ENCODE measurements at regions of chr6 and their contacts with region 1.

Region 1: DNA sequence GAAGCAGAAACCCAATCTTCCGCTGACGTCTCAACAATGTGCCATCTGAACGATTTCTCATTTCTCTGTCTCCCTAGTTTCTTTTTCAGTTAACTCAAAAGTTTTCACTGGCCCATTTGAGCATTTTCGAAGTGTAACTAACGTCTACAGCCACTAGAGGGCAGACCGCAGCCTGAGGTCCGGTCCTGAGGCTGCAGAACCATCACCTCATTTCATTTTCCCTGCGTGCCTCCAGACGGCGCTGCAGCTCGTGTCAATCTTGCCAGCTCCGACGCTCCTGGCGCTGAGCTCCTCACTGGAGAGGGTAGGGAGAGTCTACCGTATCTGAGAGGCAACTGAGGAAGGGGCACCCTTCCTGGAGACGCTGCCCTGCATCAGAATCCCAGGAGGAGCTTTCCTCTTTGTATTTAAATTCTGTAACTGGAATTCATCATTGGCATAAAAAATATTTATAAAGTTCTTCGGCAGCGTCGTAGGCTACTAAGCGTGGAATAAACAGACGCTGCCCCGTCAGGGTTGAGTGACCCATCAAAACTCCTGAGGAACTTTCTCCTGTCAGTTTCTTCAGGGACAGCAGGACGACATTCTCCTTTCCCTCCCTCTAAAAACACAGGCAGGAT is 28.5 kb upstream of the DTNBP1 start:
- DNase-seq: peak; percentile 85 to 92
- H3K4me3 ChIP-seq: peak overlapping the region; percentile 43 to 46
- H3K27ac ChIP-seq: peak overlapping the region; percentile 48 to 57
- H3K4me1 ChIP-seq: peaks cover 0 to 14% (median 9%) of the 10 kb centered on the region in 4 donors
- H3K27me3 ChIP-seq: no peaks in the 10 kb centered on the region
- CTCF ChIP-seq: peak; percentile 98 to 100

Region 2: DNA sequence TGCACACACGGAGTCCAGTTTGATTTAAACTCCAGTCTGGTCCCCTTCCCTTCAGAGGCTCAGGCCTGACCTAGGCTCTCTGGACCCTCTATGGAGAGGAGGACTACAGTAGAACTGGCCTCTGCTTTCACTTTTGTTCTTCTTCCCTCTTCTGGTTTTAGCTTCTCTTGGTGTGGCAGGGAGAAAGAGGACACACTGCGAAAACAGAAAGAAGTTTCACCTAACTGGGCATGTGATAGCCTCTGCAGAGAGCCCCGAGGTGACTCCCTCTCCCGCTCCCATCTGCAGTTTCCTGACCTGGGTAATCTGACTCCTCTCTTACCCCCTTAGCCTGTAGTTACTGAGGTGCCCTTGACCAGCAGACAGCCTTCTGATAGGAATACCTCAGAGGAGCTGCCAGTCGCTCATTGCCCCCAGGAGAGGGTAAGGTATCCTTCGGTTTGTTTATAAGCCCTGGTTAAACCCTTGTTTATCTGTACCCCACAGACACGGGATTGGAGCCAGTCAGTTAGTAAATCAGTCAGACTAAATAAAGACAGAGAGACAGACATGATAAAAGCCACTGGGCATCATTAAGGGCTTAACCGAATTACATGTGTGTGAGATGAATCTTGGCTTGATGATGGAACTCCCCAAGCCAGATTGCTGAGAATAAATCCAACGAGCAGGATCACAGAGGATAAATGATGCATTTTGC is 16.5 kb before region 1 on chr6:
- intact Hi-C with region 1: no loop called
- DNase-seq: no peak
- H3K4me3 ChIP-seq: no peak overlapping the region
- H3K27ac ChIP-seq: no peak overlapping the region
- H3K4me1 ChIP-seq: no peaks in the 10 kb centered on the region
- H3K27me3 ChIP-seq: peaks cover 0 to 7% of the 10 kb centered on the region in 2 donors
- CTCF ChIP-seq: no peak

Region 3: GRCh38 chr6:16128759-16129622 is 437.6 kb after region 1 on chr6 and contains the start of gene MYLIP:
- intact Hi-C with region 1: loop called (anchors 2 kb)
- DNase-seq: peak; percentile 96 to 99
- H3K4me3 ChIP-seq: peak within 1 kb of the TSS; percentile 84 to 90
- H3K27ac ChIP-seq: peak within 1 kb of the TSS; percentile 95 to 98
- H3K4me1 ChIP-seq: peaks cover 0 to 46% (median 24%) of the 10 kb centered on the region in 4 donors
- H3K27me3 ChIP-seq: no peaks in the 10 kb centered on the region
- CTCF ChIP-seq: peak; percentile 63 to 74

Region 4: GRCh38 chr6:16206595-16207037 is 515.3 kb after region 1 on chr6:
- intact Hi-C with region 1: loop called (anchors 2 kb)
- DNase-seq: peak in 1 of 2 donors; percentile 72
- H3K4me3 ChIP-seq: no peak overlapping the region
- H3K27ac ChIP-seq: peak overlapping the region; percentile 5 to 69
- H3K4me1 ChIP-seq: peaks cover 0 to 30% (median 12%) of the 10 kb centered on the region in 4 donors
- H3K27me3 ChIP-seq: no peaks in the 10 kb centered on the region
- CTCF ChIP-seq: peak; percentile 94 to 97

Region 5: GRCh38 chr6:16277101-16277981 is 586.0 kb after region 1 on chr6:
- intact Hi-C with region 1: loop called (anchors 10 kb)
- DNase-seq: peak; percentile 85 to 94
- H3K4me3 ChIP-seq: peak overlapping the region; percentile 10 to 11
- H3K27ac ChIP-seq: peak overlapping the region; percentile 39 to 60
- H3K4me1 ChIP-seq: peaks cover 0 to 29% (median 20%) of the 10 kb centered on the region in 4 donors
- H3K27me3 ChIP-seq: no peaks in the 10 kb centered on the region
- CTCF ChIP-seq: peak; percentile 47 to 50

Measured in tibial artery (tissue), 4 donors.